ENCODE measurements at regions of chr1 and their contacts with region 1.

Region 1: DNA sequence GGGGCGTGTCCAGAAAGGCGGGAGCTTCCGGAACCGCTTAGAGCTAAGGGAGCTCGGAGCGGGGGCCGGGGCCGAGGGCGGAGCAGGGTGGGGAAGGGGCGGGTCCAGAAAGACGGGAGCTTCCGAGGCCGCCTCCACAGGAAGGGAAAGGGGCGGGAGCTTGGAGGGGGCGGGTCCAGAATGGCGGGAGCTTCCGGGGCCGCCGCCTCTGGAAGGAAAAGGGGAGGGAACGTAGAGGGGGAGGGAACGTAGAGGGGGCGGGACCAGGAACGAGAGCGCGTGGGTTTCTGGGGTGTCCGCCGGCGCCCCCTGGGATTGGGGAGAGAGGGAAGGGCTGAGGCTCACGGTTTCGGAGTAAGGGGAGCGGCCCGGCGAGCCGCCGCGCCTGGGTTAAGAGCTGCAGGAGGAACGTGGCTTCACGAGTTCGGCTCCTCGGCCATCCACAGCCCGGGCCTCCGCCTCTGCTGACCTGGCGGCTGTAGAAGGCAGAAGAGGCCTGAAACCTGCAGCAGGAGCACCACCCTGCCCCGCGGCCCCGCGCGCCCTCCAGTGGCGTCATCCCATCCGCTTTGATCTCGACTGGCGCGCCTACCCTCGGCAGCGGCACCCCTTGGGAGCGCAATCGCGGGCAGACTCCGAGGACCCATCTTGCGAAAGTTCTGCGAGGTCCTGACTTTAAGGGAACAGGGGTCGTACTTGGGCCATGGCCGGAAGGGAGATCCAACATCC is 22.9 kb upstream of the HPDL start:
- DNase-seq: peak; percentile 99
- H3K4me3 ChIP-seq: peak overlapping the region; percentile 65
- H3K27ac ChIP-seq: peak overlapping the region; percentile 92
- H3K4me1 ChIP-seq: peaks cover 8% of the 10 kb centered on the region
- H3K27me3 ChIP-seq: no peaks in the 10 kb centered on the region
- CTCF ChIP-seq: peak; percentile 52

Region 2: DNA sequence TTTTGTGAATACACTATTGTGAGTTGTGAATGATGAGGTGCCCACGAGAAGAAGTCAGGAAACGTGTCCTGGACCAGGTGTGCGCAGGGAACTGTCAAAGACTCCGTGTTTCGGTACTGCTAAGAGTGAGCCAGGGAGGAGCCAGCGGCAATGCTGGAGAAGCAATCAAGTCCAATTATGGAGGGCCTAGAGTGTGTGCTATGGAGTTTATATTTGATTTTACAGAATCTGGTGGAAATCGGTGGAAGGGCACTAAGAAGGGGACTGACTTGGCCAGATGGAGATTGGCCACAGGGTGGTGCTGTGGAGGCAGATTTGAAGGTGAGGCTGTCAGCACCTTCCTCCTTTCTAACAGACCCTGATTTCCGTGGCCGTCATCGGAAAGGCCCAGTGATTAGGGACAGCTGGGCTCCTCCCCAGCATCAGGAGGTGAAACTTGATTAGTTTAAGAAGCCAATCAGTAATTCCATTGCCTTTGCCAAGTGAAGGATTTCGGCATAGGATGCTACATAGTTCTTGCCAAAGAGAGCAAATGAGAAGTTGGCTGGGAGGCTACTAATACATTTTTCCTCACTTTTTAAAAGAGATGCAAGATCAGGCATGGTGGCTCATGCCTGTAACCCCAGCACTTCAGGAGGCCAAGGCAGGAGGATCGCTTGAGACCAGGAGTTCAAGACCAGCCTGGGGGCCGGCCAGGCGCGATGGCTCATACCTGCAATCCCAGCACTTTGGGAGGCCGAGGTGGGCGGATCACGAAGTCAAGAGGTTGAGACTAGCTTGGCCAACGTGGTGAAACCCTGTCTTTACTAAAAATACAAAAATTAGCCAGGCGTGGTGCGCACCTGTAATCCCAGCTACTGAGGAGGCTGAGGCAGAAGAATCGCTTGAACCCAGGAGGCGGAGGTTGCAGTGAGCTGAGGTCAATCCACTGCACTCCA is 467.7 kb before region 1 on chr1:
- intact Hi-C with region 1: loop called (anchors 10 kb)
- DNase-seq: peak; percentile 91
- H3K4me3 ChIP-seq: no peak overlapping the region
- H3K27ac ChIP-seq: no peak overlapping the region
- H3K4me1 ChIP-seq: no peaks in the 10 kb centered on the region
- H3K27me3 ChIP-seq: no peaks in the 10 kb centered on the region
- CTCF ChIP-seq: peak; percentile 84

Region 3: DNA sequence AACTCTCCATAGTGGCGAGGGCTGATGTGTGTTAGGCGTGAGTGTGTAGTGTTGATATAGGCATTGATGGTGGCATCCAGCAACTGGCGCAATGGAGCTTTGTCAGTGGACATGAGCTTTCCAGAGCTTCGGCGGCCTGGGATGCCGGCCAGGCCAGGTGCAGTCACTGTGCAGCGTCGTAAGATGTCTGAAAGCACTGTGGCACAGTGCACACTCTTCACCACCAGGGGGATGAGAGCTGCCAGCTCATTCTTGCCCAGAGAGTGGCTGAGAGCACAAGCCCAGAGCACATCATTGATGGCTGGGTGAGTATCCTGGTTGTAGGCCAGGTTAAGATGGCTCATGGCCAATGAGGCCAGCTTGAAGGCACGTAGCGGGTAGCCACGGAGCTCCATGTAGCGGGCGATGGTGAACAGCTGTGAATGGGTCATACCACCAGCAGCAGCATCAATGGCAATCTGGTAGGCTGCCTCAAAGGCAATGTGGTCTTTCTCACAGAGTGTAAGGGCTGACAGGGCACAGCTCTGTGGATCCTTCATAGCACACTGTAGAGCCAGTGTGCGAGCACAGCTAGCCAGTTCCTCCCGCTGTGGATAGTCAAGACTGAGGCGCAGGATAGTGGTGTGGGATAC is 285.0 kb before region 1 on chr1:
- intact Hi-C with region 1: loop called (anchors 2 kb)
- DNase-seq: peak; percentile 71
- H3K4me3 ChIP-seq: no peak overlapping the region
- H3K27ac ChIP-seq: no peak overlapping the region
- H3K4me1 ChIP-seq: no peaks in the 10 kb centered on the region
- H3K27me3 ChIP-seq: no peaks in the 10 kb centered on the region
- CTCF ChIP-seq: peak; percentile 79

Region 4: GRCh38 chr1:45348716-45349677 is 45.3 kb after region 1 on chr1:
- intact Hi-C with region 1: no loop called
- DNase-seq: no peak
- H3K4me3 ChIP-seq: no peak overlapping the region
- H3K27ac ChIP-seq: no peak overlapping the region
- H3K4me1 ChIP-seq: no peaks in the 10 kb centered on the region
- H3K27me3 ChIP-seq: no peaks in the 10 kb centered on the region
- CTCF ChIP-seq: no peak

Region 5: GRCh38 chr1:45535988-45536766 is 232.4 kb after region 1 on chr1:
- intact Hi-C with region 1: no loop called
- DNase-seq: no peak
- H3K4me3 ChIP-seq: no peak overlapping the region
- H3K27ac ChIP-seq: no peak overlapping the region
- H3K4me1 ChIP-seq: no peaks in the 10 kb centered on the region
- H3K27me3 ChIP-seq: no peaks in the 10 kb centered on the region
- CTCF ChIP-seq: no peak